MCF 10A (cell line): ENCODE measurements at regions of chr16 and their contacts with region 1.

Region 1: DNA sequence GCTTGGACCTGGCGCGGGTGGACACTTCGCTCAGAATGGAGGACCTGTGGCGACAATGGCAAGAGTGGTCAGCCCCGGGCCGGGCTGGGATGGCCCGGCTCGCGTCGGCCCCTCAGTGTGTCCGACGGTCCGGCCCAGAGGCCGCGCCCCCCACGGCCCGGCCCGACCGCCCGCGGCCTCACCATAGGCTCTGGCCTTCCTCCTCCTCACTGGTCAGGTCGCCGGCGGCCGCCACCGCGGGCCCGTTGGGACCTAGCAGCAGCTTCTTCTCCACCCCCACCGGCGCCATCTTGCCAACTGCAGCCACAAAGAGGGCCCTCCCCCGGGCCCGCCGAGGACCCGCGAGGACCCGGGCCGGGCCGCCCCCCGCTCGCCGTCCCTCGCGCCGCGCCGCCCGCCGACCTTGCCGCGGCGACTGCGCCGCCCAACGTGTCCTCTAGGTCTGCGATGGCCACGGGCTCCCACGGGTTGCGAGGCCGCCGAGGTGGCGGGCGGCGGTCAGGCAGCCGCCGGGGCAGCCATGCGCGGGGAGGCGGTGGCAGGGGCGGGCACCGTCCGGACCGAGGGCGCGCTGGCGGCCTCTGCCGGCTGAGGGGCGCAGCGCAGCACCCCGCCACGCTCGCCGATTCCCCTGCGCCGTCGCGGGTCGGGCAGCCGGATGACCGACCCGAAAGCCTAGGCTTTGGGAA is at the start of gene DYNC1LI2:
- DNase-seq: peak; percentile 63
- H3K4me3 Mint-ChIP-seq: peak within 1 kb of the TSS; percentile 79
- H3K27ac Mint-ChIP-seq: peak within 1 kb of the TSS; percentile 92
- H3K4me1 Mint-ChIP-seq: peaks cover 30% of the 10 kb centered on the region
- H3K27me3 Mint-ChIP-seq: no peaks in the 10 kb centered on the region
- CTCF ChIP-seq: peak; percentile 83
- total RNA-seq, gene DYNC1LI2: 97.7 and 106 TPM in 2 replicates

Region 2: DNA sequence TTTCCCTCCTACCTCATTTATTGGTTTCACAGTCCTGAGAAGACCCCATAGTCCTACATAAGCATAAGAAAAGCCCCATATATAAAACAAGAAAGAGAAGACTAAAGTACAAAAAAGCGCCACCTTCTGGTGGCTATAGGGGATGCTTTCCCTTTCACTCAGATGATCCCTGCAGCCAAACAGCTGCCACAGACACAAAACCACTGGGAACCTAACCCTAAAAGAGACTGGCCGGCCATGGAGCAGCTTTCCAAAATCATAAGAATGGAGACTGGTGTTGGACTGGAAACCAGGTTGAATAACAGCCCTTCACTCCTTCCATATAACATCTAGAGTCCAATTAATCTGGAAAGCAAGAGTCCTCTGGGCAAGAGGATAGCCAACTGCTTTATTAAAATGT is 11.4 kb before region 1 on chr16:
- CTCF ChIA-PET with region 1: interaction called, 71 read pairs
- POLR2A ChIA-PET with region 1: interaction called, 38 read pairs
- intact Hi-C with region 1: no loop called
- DNase-seq: peak; percentile 56
- H3K4me3 Mint-ChIP-seq: no peak overlapping the region
- H3K27ac Mint-ChIP-seq: peak overlapping the region; percentile 66
- H3K4me1 Mint-ChIP-seq: peaks cover 32% of the 10 kb centered on the region
- H3K27me3 Mint-ChIP-seq: no peaks in the 10 kb centered on the region
- CTCF ChIP-seq: peak; percentile 58